Caco-2 (cell line): ENCODE measurements at regions of chr12 and their contacts with region 1.

Region 1: GRCh38 chr12:75892731-75893408 is 138.7 kb downstream of the PHLDA1 start:
- DNase-seq: peak; percentile 75 to 91
- H3K4me3 ChIP-seq: no peak overlapping the region
- H3K4me3 Mint-ChIP-seq: peak overlapping the region; percentile 0
- H3K27ac Mint-ChIP-seq: peak overlapping the region; percentile 74
- H3K4me1 ChIP-seq: peaks cover 30% of the 10 kb centered on the region
- H3K4me1 Mint-ChIP-seq: peaks cover 33% of the 10 kb centered on the region
- H3K27me3 ChIP-seq: no peaks in the 10 kb centered on the region
- H3K27me3 Mint-ChIP-seq: no peaks in the 10 kb centered on the region
- CTCF ChIP-seq: no peak

Region 2: GRCh38 chr12:75623631-75624118 is 269.2 kb before region 1 on chr12:
- CTCF ChIA-PET with region 1: no interaction called
- POLR2A ChIA-PET with region 1: no interaction called
- intact Hi-C with region 1: loop called (anchors 5 kb)
- DNase-seq: peak; percentile 46 to 50
- H3K4me3 ChIP-seq: no peak overlapping the region
- H3K4me3 Mint-ChIP-seq: no peak overlapping the region
- H3K27ac Mint-ChIP-seq: peak overlapping the region; percentile 76
- H3K4me1 ChIP-seq: peaks cover 17% of the 10 kb centered on the region
- H3K4me1 Mint-ChIP-seq: peaks cover 20% of the 10 kb centered on the region
- H3K27me3 ChIP-seq: no peaks in the 10 kb centered on the region
- H3K27me3 Mint-ChIP-seq: no peaks in the 10 kb centered on the region
- CTCF ChIP-seq: peak; percentile 20 to 51

Region 3: GRCh38 chr12:75712252-75712651 is 180.6 kb before region 1 on chr12:
- CTCF ChIA-PET with region 1: no interaction called
- POLR2A ChIA-PET with region 1: no interaction called
- intact Hi-C with region 1: no loop called
- DNase-seq: no peak
- H3K4me3 ChIP-seq: no peak overlapping the region
- H3K4me3 Mint-ChIP-seq: no peak overlapping the region
- H3K27ac Mint-ChIP-seq: no peak overlapping the region
- H3K4me1 ChIP-seq: peaks cover 28% of the 10 kb centered on the region
- H3K4me1 Mint-ChIP-seq: peaks cover 33% of the 10 kb centered on the region
- H3K27me3 ChIP-seq: no peaks in the 10 kb centered on the region
- H3K27me3 Mint-ChIP-seq: no peaks in the 10 kb centered on the region
- CTCF ChIP-seq: no peak

Region 4: GRCh38 chr12:75722714-75723200 is 170.1 kb before region 1 on chr12:
- CTCF ChIA-PET with region 1: no interaction called
- POLR2A ChIA-PET with region 1: interaction called, 10 read pairs
- intact Hi-C with region 1: no loop called
- DNase-seq: no peak
- H3K4me3 ChIP-seq: no peak overlapping the region
- H3K4me3 Mint-ChIP-seq: no peak overlapping the region
- H3K27ac Mint-ChIP-seq: peak overlapping the region; percentile 68
- H3K4me1 ChIP-seq: peaks cover 62% of the 10 kb centered on the region
- H3K4me1 Mint-ChIP-seq: peaks cover 50% of the 10 kb centered on the region
- H3K27me3 ChIP-seq: no peaks in the 10 kb centered on the region
- H3K27me3 Mint-ChIP-seq: no peaks in the 10 kb centered on the region
- CTCF ChIP-seq: no peak

Region 5: GRCh38 chr12:75848431-75848925 is 44.4 kb before region 1 on chr12:
- CTCF ChIA-PET with region 1: no interaction called
- POLR2A ChIA-PET with region 1: no interaction called
- intact Hi-C with region 1: loop called (anchors 1 kb)
- DNase-seq: no peak
- H3K4me3 ChIP-seq: no peak overlapping the region
- H3K4me3 Mint-ChIP-seq: no peak overlapping the region
- H3K27ac Mint-ChIP-seq: no peak overlapping the region
- H3K4me1 ChIP-seq: no peaks in the 10 kb centered on the region
- H3K4me1 Mint-ChIP-seq: peaks cover 22% of the 10 kb centered on the region
- H3K27me3 ChIP-seq: no peaks in the 10 kb centered on the region
- H3K27me3 Mint-ChIP-seq: no peaks in the 10 kb centered on the region
- CTCF ChIP-seq: no peak

Region 6: GRCh38 chr12:76057326-76057725 is 164.5 kb after region 1 on chr12:
- CTCF ChIA-PET with region 1: no interaction called
- POLR2A ChIA-PET with region 1: no interaction called
- intact Hi-C with region 1: no loop called
- DNase-seq: no peak
- H3K4me3 ChIP-seq: no peak overlapping the region
- H3K4me3 Mint-ChIP-seq: no peak overlapping the region
- H3K27ac Mint-ChIP-seq: no peak overlapping the region
- H3K4me1 ChIP-seq: no peaks in the 10 kb centered on the region
- H3K4me1 Mint-ChIP-seq: no peaks in the 10 kb centered on the region
- H3K27me3 ChIP-seq: no peaks in the 10 kb centered on the region
- H3K27me3 Mint-ChIP-seq: no peaks in the 10 kb centered on the region
- CTCF ChIP-seq: no peak